GM23248 (cell line): ENCODE measurements at regions of chr1 and their contacts with region 1.

Region 1: DNA sequence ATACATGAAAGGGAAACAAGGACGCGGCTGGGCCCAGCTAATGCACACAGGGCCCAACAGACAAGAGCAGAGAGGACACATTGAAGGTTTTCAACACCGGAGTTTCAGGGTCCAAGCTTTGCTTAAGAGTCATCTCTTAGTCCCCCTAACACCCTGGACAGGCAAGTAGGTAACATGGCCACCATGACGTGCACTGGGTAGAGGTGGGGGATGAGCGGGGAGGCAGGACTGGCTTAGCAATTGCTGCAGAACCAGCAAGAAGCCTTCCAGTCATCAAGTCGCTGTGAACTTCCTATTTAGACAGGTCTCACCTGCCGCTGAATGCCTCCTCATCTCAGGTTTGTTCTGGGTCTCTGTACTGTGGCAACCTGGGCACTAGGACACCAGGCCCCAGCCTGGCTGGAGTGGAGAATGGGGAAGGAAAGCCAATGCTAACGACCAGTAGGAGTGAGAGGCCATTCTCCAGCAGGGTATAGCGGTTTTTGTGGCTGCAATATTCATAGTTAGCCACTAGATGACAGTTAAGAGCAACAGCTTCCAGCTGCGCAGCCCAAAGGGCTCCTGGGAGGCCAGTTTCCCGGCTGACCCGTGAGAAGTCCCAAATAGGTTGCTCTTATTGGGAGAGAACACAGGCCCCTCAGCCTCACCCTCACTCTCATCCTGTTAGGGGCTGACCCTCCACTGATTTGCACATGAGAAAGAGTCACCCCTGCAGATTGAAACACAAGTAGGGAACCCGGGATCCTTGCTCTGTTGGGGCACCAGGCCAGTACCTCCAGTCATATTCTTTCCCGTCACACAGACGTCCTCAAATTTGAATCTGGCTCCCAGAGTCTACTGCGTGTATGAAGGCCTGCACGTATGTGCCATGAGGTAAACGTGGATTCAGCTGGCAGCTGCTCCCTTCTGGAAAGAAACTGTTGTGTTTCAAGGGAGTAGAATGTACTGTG is 6.0 kb upstream of the PIGC start:
- DNase-seq: peak; percentile 83
- H3K4me3 ChIP-seq: no peak overlapping the region
- H3K27ac ChIP-seq: no peak overlapping the region
- H3K4me1 ChIP-seq: peaks cover 14% of the 10 kb centered on the region
- H3K27me3 ChIP-seq: no peaks in the 10 kb centered on the region

Region 2: DNA sequence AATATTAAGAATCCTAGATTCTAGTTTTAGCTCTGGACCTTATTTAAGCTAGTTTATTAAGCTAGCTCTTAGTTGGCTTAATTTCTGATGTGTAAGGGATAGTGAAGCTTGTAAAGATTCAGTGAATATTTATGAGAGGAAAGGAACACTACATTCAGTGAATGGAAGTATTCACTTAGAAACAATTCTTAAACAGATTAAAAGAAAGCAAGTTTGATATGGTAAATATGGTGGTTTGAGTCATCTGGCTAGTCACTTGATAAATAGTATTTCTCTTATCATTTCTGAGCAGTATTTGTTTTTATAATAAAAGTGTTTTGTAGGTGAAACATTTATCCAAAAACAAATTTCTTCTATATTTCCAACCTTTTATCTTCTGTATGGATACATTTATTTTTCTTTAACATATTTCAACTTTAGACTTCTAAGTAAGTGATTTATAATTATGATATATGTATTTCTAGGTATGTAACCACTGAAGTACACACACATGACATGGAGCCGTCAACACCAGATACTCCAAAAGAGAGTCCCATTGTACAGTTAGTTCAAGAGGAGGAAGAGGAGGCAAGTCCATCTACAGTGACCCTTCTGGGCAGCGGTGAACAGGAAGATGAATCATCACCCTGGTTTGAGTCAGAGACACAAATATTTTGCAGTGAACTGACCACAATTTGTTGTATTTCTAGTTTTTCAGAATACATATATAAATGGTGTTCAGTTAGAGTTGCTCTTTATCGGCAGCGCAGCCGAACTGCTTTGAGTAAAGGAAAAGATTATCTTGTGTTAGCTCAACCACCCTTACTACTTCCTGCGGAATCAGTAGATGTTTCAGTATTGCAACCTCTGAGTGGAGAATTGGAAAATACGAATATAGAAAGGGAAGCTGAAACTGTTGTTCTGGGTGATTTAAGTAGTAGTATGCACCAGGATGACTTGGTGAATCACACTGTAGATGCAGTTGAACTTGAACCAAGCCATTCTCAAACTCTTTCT is 138.7 kb after region 1 on chr1:
- in situ Hi-C with region 1: no loop called
- DNase-seq: peak; percentile 90
- H3K4me3 ChIP-seq: peak overlapping the region; percentile 32
- H3K27ac ChIP-seq: peak overlapping the region; percentile 70
- H3K4me1 ChIP-seq: peaks cover 50% of the 10 kb centered on the region
- H3K27me3 ChIP-seq: no peaks in the 10 kb centered on the region

Region 3: DNA sequence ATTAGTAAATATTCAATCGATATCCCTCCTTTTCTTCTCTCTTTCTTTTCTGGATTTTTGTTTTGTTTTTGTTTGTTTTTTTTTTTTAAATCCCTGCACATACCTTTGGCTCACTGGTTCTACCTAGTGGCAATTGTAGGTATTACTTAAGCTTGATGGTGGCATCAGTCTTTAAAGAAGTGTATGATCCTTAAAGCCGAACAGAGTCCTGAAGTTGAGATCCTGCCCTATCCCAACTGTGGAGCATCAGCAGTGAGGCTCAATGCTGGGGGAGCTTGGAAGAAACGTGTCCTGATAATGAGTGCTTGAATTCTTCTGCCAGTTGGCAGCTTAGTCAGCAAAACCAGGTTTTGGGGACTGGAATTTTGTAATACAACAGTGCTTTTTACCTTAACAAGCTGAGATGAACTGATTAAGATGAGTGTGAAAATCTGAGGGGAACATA is 269.9 kb after region 1 on chr1:
- in situ Hi-C with region 1: loop called (anchors 10 kb)
- DNase-seq: peak; percentile 58
- H3K4me3 ChIP-seq: no peak overlapping the region
- H3K27ac ChIP-seq: no peak overlapping the region
- H3K4me1 ChIP-seq: no peaks in the 10 kb centered on the region
- H3K27me3 ChIP-seq: no peaks in the 10 kb centered on the region